GM10248 (cell line): ENCODE measurements at regions of chr12 and their contacts with region 1.

Region 1: GRCh38 chr12:50074936-50075807 is 10.0 kb upstream of the SMARCD1 start:
- DNase-seq: peak; percentile 89
- CTCF ChIP-seq: peak; percentile 94

Region 2: DNA sequence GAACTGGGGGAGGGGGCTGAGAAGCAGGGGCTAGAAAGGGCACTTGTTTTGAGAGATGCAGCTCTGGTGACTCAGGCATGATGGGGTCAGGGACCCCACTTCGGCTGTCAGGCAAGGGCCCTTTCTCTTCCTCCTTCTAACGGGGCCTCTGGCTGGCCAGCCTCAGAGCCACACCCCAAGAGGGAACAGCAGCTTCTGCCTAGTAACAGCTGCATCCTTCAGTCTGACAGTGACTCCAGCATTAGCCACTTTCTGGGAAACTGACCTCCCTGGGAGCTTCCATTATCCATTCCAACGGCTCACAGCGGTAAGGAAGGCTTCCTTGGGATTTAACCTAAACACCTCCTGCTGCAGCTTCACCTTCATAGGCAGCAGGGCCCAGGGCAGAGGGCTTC is 249.8 kb before region 1 on chr12:
- CTCF ChIA-PET with region 1: no interaction called
- POLR2A ChIA-PET with region 1: no interaction called
- DNase-seq: no peak
- CTCF ChIP-seq: no peak

Region 3: GRCh38 chr12:49945394-49946080 is 129.6 kb before region 1 on chr12:
- CTCF ChIA-PET with region 1: interaction called, 18 read pairs
- POLR2A ChIA-PET with region 1: no interaction called
- DNase-seq: peak; percentile 92
- CTCF ChIP-seq: peak; percentile 90

Region 4: DNA sequence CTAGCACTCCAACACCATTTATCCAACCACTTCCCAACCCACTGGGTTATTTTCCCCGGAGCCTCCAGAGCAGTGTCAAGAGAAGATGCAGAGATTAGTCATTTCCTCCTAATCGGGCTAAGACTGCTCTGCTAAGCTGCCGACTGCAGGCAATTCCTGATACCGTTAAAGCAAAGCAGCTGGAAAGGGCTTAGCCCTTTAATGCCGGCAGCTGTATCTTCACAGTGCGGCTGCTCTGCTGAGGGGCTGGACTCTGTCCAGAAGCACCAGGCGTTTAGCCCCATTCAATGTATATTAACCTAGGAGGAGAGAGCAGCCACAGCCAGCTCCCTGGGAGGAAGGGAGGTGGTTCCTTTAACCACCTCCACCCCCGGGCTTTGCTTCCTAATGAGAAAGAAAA is 91.3 kb before region 1 on chr12:
- CTCF ChIA-PET with region 1: interaction called, 12 read pairs
- POLR2A ChIA-PET with region 1: no interaction called
- DNase-seq: peak; percentile 11
- CTCF ChIP-seq: no peak

Region 5: DNA sequence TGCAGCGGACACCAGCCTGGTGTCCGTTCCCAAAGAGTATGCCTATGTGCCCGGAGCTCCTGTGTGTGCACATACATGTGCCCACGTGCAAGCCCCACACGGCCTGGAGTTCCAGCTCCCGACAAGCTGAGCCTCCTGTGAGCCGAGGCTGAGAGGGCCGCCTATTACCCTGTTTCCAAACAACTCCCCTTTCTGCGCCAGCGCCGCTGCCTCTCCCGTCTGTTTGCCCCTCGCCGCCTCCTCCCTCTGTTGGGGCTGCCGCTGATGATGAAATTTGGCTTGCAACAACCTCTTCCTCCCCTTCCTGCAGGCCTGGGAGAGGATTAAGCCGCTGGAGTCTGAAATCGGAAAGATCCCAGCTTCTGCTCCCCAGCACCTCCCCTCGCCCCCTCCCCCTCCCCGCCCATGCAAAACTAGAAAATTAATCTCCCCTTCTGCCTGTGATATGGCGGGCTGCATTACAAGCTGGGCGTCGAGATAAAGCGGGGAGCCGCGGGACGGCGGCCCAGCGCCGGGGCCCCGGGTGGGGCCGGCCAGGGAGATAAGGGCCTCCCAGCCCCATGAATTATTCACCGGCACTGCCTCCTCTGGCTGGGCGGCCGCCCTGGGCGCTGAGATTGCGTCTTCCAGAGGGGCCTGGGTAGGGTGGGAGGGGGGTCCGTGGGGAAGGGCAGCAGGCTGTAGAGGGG is 24.6 kb before region 1 on chr12:
- CTCF ChIA-PET with region 1: interaction called, 92 read pairs
- POLR2A ChIA-PET with region 1: no interaction called
- DNase-seq: no peak
- CTCF ChIP-seq: no peak

Region 6: GRCh38 chr12:50167041-50167828 is 92.1 kb after region 1 on chr12 and contains the start of gene CERS5:
- CTCF ChIA-PET with region 1: interaction called, 39 read pairs
- POLR2A ChIA-PET with region 1: interaction called, 8 read pairs
- DNase-seq: peak; percentile 100
- CTCF ChIP-seq: no peak